CD8-positive, alpha-beta T cell (primary cell): ENCODE measurements at regions of chr9 and their contacts with region 1.

Region 1: GRCh38 chr9:12849486-12850004 is 74.7 kb downstream of the LURAP1L start:
- DNase-seq: no peak
- ATAC-seq: no peak
- H3K4me3 ChIP-seq: no peak overlapping the region
- H3K4me3 Mint-ChIP-seq: no peak overlapping the region
- H3K27ac ChIP-seq: no peak overlapping the region
- H3K27ac Mint-ChIP-seq: no peak overlapping the region
- H3K4me1 ChIP-seq: no peaks in the 10 kb centered on the region
- H3K4me1 Mint-ChIP-seq: no peaks in the 10 kb centered on the region
- H3K27me3 ChIP-seq: no peaks in the 10 kb centered on the region
- H3K27me3 Mint-ChIP-seq: no peaks in the 10 kb centered on the region
- CTCF ChIP-seq: no peak

Region 2: DNA sequence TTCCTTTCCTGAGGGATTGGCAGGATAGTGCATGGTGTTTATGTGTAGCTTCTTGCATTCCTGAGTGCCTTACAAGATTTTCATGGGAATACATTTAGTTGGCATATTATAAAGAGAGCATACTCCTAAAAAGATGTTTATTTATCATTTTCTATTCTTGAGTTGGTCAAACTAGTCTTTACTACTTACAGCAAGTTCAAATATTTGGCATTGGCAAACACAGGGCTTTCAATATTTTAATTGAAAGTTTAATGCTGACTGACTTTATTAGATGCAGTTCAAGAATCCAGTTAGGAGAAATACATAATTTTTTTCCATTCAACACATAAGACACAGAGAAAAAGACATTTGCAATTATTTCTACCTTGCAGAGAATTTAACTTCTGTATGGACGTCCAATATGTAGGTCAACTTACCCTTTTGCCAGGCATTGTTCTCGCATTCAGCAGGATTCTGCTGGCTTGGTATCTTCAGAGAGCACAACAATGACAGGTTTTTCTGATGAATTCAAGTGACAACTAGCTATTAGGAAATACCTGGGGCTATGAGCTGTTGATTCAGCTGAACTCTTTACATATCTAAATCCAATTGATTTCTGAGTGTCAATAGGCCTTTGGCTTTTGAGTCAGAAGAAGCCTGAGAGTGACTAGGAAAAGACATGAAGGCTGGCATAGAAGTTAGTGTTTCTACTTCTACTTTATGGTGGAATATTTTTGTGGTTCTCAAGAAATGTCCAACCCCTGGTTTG is 54.9 kb after region 1 on chr9:
- CTCF ChIA-PET with region 1: no interaction called
- POLR2A ChIA-PET with region 1: no interaction called
- intact Hi-C with region 1: loop called in 1 of 2 experiments (anchors 5 kb)
- DNase-seq: no peak
- ATAC-seq: no peak
- H3K4me3 ChIP-seq: no peak overlapping the region
- H3K4me3 Mint-ChIP-seq: no peak overlapping the region
- H3K27ac ChIP-seq: no peak overlapping the region
- H3K27ac Mint-ChIP-seq: no peak overlapping the region
- H3K4me1 ChIP-seq: no peaks in the 10 kb centered on the region
- H3K4me1 Mint-ChIP-seq: no peaks in the 10 kb centered on the region
- H3K27me3 ChIP-seq: no peaks in the 10 kb centered on the region
- H3K27me3 Mint-ChIP-seq: no peaks in the 10 kb centered on the region
- CTCF ChIP-seq: no peak

Region 3: DNA sequence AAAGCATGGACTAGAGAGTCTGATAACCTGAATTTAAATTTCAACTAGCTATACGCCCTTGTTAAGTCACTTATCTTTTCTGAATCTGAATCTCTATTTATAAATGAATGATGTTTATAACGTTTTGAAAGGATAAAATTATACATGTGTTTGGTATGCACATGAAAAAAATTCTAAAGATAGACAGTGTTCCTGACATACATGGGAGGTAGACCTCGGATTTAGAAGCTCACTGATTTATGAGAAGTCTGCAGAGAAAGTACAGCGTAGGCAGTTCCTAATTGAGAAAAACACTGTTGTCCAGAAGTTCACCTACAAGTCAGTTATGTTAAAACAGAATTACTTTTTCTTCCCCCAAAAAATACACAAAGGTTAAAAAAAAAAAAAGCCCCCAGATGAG is 403.3 kb after region 1 on chr9:
- CTCF ChIA-PET with region 1: no interaction called
- POLR2A ChIA-PET with region 1: no interaction called
- intact Hi-C with region 1: no loop called
- DNase-seq: no peak
- ATAC-seq: no peak
- H3K4me3 ChIP-seq: no peak overlapping the region
- H3K4me3 Mint-ChIP-seq: no peak overlapping the region
- H3K27ac ChIP-seq: no peak overlapping the region
- H3K27ac Mint-ChIP-seq: no peak overlapping the region
- H3K4me1 ChIP-seq: no peaks in the 10 kb centered on the region
- H3K4me1 Mint-ChIP-seq: no peaks in the 10 kb centered on the region
- H3K27me3 ChIP-seq: no peaks in the 10 kb centered on the region
- H3K27me3 Mint-ChIP-seq: no peaks in the 10 kb centered on the region
- CTCF ChIP-seq: no peak